Activated CD4-positive, alpha-beta memory T cell treated with anti-CD3 and anti-CD28 coated beads for 36 hours (primary cell): ENCODE measurements at regions of chr5 and their contacts with region 1.

Region 1: GRCh38 chr5:138128334-138128733 is 10.9 kb downstream of the NME5 start:
- DNase-seq: no peak
- H3K4me3 Mint-ChIP-seq: no peak overlapping the region
- H3K27ac Mint-ChIP-seq: no peak overlapping the region
- H3K4me1 Mint-ChIP-seq: peaks cover 2% of the 10 kb centered on the region
- H3K27me3 Mint-ChIP-seq: peaks cover 3% of the 10 kb centered on the region

Region 2: GRCh38 chr5:138083702-138084101 is 44.6 kb before region 1 on chr5 and contains the start of gene WNT8A:
- CTCF ChIA-PET with region 1: interaction called, 90 read pairs
- POLR2A ChIA-PET with region 1: no interaction called
- intact Hi-C with region 1: no loop called
- DNase-seq: no peak
- H3K4me3 Mint-ChIP-seq: no peak within 1 kb of the TSS
- H3K27ac Mint-ChIP-seq: no peak within 1 kb of the TSS
- H3K4me1 Mint-ChIP-seq: peaks cover 13% of the 10 kb centered on the region
- H3K27me3 Mint-ChIP-seq: no peaks in the 10 kb centered on the region
- total RNA-seq, gene WNT8A: not detected